Activated B cell treated with CpG ODN at 0.5 μM for 24 hours (primary cell): ENCODE measurements at regions of chr2 and their contacts with region 1.

Region 1: DNA sequence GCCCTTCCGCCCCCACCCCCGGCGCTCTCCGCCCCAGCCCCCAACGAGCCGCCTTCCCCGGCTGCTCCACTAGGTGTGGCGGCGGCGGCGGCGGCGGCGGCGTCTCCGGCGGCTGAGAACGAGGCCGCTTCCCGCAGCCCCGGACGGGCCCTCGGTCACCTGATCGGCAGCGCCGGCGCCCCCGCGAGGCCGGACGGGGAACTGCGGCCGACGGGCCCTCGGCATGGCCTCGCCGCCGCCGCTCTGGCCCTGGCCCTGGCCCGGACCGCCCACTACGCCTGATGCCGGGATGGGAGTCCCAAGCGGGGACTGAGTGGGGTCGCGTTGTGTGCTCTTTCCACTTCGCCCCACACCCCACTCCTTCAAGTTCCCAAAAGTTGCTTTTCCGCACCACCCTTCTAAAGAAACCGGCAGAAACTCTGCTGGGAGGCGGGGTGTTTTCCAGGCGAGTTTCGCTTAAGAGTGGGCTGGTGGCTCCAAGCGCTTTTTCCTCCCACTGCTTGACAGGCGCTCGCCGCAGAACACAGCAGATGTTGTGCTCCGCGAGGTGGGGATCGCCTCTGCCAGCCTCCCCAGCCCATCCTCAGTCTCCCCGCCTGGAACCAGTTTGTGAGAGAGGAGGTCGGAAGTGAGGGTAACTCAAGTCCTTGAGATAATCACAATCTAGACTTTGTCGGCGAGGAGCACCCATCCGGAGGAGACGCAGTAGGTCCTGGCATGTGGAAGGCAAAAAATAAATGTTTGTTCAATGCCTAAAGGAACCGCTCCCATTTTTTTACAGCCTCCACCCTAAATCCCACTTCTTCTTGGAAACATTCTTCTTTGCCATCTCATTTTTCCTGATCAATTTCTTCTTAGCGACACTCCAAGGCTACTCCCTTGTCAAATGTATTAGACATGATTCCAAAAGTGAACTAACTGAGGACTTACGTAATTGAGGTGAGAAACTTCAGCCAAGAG is at the start of gene NCKAP1:
- DNase-seq: peak; percentile 59
- ATAC-seq: peak; percentile 70
- H3K4me3 Mint-ChIP-seq: peak within 1 kb of the TSS; percentile 55
- H3K27ac Mint-ChIP-seq: no peak within 1 kb of the TSS
- H3K4me1 Mint-ChIP-seq: peaks cover 27% of the 10 kb centered on the region
- H3K27me3 Mint-ChIP-seq: peaks cover 41% of the 10 kb centered on the region
- CTCF ChIP-seq: no peak
- total RNA-seq, gene NCKAP1: 0.22 TPM in 1 of 2 replicates, not detected in the other

Region 2: DNA sequence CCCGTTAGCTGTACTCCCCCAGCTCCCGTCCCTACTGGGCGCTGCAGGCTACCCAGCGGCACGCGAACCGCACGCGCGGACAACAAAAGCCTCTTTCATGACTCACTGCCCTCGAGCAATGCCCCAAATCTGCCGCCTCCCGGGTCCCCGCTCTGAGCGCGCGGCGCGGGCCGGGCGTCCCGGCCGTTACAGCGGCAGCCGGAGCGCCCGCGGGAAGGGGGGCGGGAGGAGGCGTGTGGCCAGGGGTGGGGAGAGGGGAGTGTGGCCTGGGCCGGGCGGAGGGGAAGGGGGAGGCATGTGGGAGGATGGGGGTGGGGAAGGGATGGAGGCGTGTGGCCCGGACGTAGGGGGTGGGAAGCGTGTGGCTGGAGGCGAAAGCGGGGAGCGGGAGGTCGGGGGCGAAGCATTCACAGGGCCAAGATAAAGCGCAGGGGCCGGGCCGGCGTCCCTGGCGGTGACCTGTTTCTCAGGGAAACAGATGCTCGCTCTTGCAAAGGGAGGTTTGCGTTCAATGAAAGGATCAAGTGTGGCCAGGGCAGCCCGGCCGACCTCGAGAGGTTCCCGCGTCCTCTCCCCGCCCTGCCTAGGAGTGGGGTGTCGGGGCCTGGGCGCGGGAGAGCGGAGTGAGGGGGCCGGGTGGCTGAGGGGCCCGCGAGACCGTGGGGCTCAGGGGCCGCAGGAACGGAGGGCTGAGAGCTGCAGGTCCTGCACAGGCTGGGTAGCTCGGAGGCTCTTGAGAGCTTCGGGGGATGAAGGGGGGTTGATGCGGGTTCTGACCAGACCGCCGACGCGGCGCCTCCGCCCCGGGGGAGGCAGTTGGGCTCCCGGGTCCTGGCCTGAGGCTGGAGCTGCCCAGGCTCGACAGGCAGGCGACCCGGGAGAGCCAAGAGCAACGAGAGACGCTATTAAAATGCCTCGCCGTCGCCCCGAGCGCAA is 1354.8 kb before region 1 on chr2:
- CTCF ChIA-PET with region 1: no interaction called
- POLR2A ChIA-PET with region 1: no interaction called
- intact Hi-C with region 1: loop called (anchors 10 kb)
- DNase-seq: peak; percentile 24
- ATAC-seq: peak; percentile 43
- H3K4me3 Mint-ChIP-seq: peak overlapping the region; percentile 68
- H3K27ac Mint-ChIP-seq: no peak overlapping the region
- H3K4me1 Mint-ChIP-seq: peaks cover 51% of the 10 kb centered on the region
- H3K27me3 Mint-ChIP-seq: peaks cover 81% of the 10 kb centered on the region
- CTCF ChIP-seq: no peak

Region 3: DNA sequence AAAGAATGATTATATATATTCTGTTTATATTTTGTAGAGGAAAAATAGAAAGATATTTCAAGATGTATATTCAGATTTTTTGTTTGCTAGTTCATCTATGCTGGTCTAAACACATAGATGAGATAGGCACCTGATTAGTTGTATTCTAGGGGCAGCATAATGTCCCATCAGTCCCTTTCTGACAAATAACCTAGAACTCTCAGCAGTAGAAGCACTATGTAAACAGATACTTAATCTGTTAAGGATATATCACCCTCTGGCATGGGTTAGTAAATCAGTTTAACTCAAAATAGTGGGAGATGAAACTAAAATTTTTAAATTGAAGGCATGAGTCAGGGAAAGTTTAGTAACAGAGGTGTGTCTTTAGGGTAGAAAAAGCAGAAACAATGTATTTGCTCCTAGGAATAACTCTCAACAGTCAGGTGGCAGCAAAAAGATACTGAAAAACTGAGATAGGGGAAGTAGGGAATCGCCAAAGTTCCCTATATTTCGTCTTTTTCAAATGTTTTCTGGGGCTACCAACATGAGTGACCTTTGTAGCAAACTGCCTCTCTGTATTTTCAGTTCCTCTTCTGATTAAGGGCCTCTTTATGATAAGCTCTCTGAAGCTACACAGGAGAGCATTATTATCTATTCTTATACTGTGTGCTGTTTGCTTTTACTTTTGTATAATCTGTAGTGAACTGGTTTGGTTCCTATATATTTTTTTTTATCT is 1047.3 kb before region 1 on chr2:
- CTCF ChIA-PET with region 1: no interaction called
- POLR2A ChIA-PET with region 1: no interaction called
- intact Hi-C with region 1: loop called (anchors 10 kb)
- DNase-seq: no peak
- ATAC-seq: peak; percentile 91
- H3K4me3 Mint-ChIP-seq: peak overlapping the region; percentile 35
- H3K27ac Mint-ChIP-seq: peak overlapping the region; percentile 75
- H3K4me1 Mint-ChIP-seq: peaks cover 34% of the 10 kb centered on the region
- H3K27me3 Mint-ChIP-seq: no peaks in the 10 kb centered on the region
- CTCF ChIP-seq: no peak

Region 4: DNA sequence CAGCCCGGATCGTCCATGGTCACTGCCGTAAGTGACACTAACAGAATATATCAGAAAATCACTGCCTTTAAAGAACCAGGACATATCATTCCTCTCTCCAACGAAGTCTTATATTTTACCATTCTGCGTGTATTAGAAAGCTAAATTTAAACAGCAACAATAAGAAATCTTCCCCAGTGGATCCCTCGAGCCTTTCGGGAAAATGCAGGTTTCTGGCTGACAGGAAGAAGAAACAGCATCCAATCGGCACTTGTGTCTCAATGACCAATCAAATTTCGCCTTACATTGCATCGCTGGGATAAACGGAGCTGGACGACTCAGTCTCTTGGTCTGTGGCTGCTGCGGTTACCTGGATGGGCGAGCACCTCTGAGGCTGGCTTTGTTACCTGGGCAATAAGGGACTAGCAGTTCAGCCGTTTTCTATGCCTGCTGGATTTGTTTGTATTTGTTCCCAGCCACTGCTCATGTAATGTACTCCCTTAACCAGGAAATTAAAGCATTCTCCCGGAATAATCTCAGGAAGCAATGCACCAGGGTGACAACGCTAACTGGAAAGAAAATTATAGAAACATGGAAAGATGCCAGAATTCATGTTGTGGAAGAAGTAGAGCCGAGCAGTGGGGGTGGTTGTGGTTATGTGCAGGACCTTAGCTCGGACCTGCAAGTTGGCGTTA is 40.0 kb after region 1 on chr2 and contains the start of gene DUSP19:
- CTCF ChIA-PET with region 1: no interaction called
- POLR2A ChIA-PET with region 1: no interaction called
- intact Hi-C with region 1: loop called (anchors 1 kb)
- DNase-seq: peak; percentile 61
- ATAC-seq: peak; percentile 90
- H3K4me3 Mint-ChIP-seq: peak within 1 kb of the TSS; percentile 93
- H3K27ac Mint-ChIP-seq: peak within 1 kb of the TSS; percentile 76
- H3K4me1 Mint-ChIP-seq: peaks cover 9% of the 10 kb centered on the region
- H3K27me3 Mint-ChIP-seq: peaks cover 6% of the 10 kb centered on the region
- CTCF ChIP-seq: no peak
- total RNA-seq, gene DUSP19: 0.31 and 0.49 TPM in 2 replicates

Region 5: DNA sequence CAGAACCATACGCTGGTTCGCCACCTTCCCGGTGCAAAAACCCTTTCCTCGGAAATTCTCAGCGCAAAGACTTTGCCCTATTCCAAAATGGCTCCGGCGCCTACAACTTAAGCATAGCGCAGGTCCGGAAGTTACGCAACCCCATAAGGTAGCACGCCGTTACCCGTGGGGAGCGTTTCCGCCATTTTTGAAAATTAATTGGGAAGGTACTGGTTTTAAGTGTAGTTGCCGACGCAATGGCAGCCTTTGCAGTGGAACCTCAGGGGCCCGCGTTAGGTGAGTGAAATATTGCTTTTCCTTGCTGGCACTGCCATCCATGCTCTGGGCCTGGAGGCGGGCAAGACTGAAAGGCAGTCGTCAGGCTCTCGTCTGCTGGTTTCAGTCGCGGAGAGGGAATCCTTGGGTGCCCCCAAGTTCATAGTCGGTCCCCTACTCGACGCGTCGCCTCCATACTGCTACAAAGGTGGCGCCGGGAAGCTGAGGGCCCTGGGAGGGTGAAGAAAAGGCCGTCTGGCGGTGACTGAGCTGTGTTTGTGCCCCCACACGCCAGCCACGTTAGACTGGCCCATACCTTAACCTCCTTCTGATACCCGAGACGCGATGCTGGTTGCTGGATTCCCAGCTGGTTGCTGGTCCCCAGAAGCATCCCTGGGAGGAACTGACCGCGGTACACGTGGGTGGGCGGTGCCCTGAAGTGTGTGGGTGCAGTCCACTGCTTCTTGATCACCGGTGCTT is 85.8 kb after region 1 on chr2 and contains the start of gene NUP35:
- CTCF ChIA-PET with region 1: no interaction called
- POLR2A ChIA-PET with region 1: interaction called, 5 read pairs
- intact Hi-C with region 1: loop called (anchors 2 kb)
- DNase-seq: peak; percentile 70
- ATAC-seq: peak; percentile 96
- H3K4me3 Mint-ChIP-seq: peak within 1 kb of the TSS; percentile 96
- H3K27ac Mint-ChIP-seq: peak within 1 kb of the TSS; percentile 95
- H3K4me1 Mint-ChIP-seq: peaks cover 29% of the 10 kb centered on the region
- H3K27me3 Mint-ChIP-seq: peaks cover 11% of the 10 kb centered on the region
- CTCF ChIP-seq: no peak
- total RNA-seq, gene NUP35: 19.6 and 25.1 TPM in 2 replicates

Region 6: DNA sequence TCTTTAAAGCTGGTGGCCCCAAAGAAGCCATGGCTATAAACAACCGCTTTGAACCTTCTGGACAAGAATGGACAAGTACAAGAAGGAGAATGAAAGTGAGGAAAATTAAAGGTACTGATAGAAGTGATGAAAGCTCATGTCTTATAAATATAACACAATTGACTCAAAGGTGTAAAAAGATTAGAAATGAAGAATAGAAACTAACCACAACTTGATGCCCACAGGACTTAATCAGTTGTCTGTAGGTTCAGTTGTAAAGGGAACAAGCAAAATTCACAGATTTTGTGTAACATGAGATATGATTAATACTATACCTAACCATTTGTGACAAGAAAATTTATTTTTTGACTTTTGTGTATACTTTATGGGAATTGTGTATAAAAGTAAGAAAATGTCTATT is 221.3 kb after region 1 on chr2:
- CTCF ChIA-PET with region 1: no interaction called
- POLR2A ChIA-PET with region 1: no interaction called
- intact Hi-C with region 1: no loop called
- DNase-seq: no peak
- ATAC-seq: no peak
- H3K4me3 Mint-ChIP-seq: no peak overlapping the region
- H3K27ac Mint-ChIP-seq: no peak overlapping the region
- H3K4me1 Mint-ChIP-seq: no peaks in the 10 kb centered on the region
- H3K27me3 Mint-ChIP-seq: no peaks in the 10 kb centered on the region
- CTCF ChIP-seq: no peak